ENCODE measurements at regions of chr15 and their contacts with region 1.

Region 1: GRCh38 chr15:100713163-100713867 is 110.9 kb downstream of the ASB7 start:
- DNase-seq: no peak
- ATAC-seq: peak in 3 of 4 donors; percentile 32 to 47 (median 42)
- H3K4me3 ChIP-seq: no peak overlapping the region
- H3K27ac ChIP-seq: peak overlapping the region in 3 of 12 donors; percentile 21 to 62 (median 30)
- H3K4me1 ChIP-seq: peaks cover 0 to 44% (median 16%) of the 10 kb centered on the region in 12 donors
- H3K27me3 ChIP-seq: no peaks in the 10 kb centered on the region
- CTCF ChIP-seq: no peak
- POLR2A ChIP-seq: no peak

Region 2: GRCh38 chr15:100663086-100663914 is 50.0 kb before region 1 on chr15:
- intact Hi-C with region 1: loop called in 1 of 10 experiments (anchors 5 kb)
- DNase-seq: no peak
- ATAC-seq: peak in 1 of 4 donors; percentile 36
- H3K4me3 ChIP-seq: no peak overlapping the region
- H3K27ac ChIP-seq: peak overlapping the region in 2 of 12 donors; percentile 13 to 47
- H3K4me1 ChIP-seq: peaks cover 0 to 23% (median 1%) of the 10 kb centered on the region in 12 donors
- H3K27me3 ChIP-seq: peaks cover 0 to 7% (median 0%) of the 10 kb centered on the region in 9 donors
- CTCF ChIP-seq: peak in 1 of 12 donors; percentile 7
- POLR2A ChIP-seq: no peak

Measured in heart left ventricle (tissue), 16 donors.